B cell (primary cell): ENCODE measurements at regions of chr5 and their contacts with region 1.

Region 1: GRCh38 chr5:124649491-124650146 is 96.8 kb downstream of the ZNF608 start:
- DNase-seq: peak; percentile 96
- ATAC-seq: peak; percentile 74
- H3K4me3 ChIP-seq: peak overlapping the region; percentile 1 to 54 (median 25)
- H3K4me3 Mint-ChIP-seq: peak overlapping the region; percentile 38
- H3K27ac ChIP-seq: peak overlapping the region; percentile 76 to 84
- H3K27ac Mint-ChIP-seq: peak overlapping the region; percentile 88
- H3K4me1 ChIP-seq: peaks cover 70 to 88% of the 10 kb centered on the region in 2 donors
- H3K4me1 Mint-ChIP-seq: peaks cover 84% of the 10 kb centered on the region
- H3K27me3 ChIP-seq: peaks cover 0 to 24% (median 0%) of the 10 kb centered on the region in 4 experiments
- H3K27me3 Mint-ChIP-seq: no peaks in the 10 kb centered on the region
- CTCF ChIP-seq: no peak

Region 2: DNA sequence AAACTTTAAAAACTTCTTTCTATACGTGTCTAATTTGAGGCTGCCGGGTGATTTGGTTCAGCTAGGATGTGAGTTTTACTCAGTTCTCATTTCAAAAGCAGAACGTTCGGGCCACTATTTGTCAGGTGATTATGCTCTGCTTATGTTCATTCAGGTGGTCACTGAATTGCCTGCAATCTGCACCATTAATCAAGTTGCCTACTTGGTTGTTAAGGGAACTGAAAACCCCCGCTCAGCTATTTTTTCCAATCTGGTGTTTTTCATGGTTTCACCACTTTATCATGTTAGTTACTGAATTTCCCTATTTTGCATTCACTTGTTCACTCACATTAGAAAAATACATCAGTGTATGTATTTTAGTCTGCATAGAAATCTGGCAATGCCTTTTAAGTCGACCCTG is 614.7 kb before region 1 on chr5:
- CTCF ChIA-PET with region 1: no interaction called
- POLR2A ChIA-PET with region 1: no interaction called
- intact Hi-C with region 1: loop called (anchors 1 kb)
- DNase-seq: peak; percentile 90
- ATAC-seq: peak; percentile 94
- H3K4me3 ChIP-seq: peak overlapping the region in 1 of 5 experiments; percentile 31
- H3K4me3 Mint-ChIP-seq: peak overlapping the region; percentile 69
- H3K27ac ChIP-seq: peak overlapping the region; percentile 45 to 71
- H3K27ac Mint-ChIP-seq: peak overlapping the region; percentile 59
- H3K4me1 ChIP-seq: peaks cover 22 to 33% of the 10 kb centered on the region in 2 donors
- H3K4me1 Mint-ChIP-seq: peaks cover 35% of the 10 kb centered on the region
- H3K27me3 ChIP-seq: no peaks in the 10 kb centered on the region
- H3K27me3 Mint-ChIP-seq: no peaks in the 10 kb centered on the region
- CTCF ChIP-seq: no peak

Region 3: GRCh38 chr5:124410539-124411488 is 238.8 kb before region 1 on chr5:
- CTCF ChIA-PET with region 1: no interaction called
- POLR2A ChIA-PET with region 1: interaction called, 3 read pairs
- intact Hi-C with region 1: loop called (anchors 5 kb)
- DNase-seq: peak; percentile 72
- ATAC-seq: peak; percentile 96
- H3K4me3 ChIP-seq: peak overlapping the region in 2 of 5 experiments; percentile 14 to 24
- H3K4me3 Mint-ChIP-seq: peak overlapping the region; percentile 60
- H3K27ac ChIP-seq: no peak overlapping the region
- H3K27ac Mint-ChIP-seq: no peak overlapping the region
- H3K4me1 ChIP-seq: peaks cover 22 to 24% of the 10 kb centered on the region in 2 donors
- H3K4me1 Mint-ChIP-seq: peaks cover 21% of the 10 kb centered on the region
- H3K27me3 ChIP-seq: no peaks in the 10 kb centered on the region
- H3K27me3 Mint-ChIP-seq: no peaks in the 10 kb centered on the region
- CTCF ChIP-seq: no peak

Region 4: GRCh38 chr5:124524552-124525232 is 124.9 kb before region 1 on chr5:
- CTCF ChIA-PET with region 1: interaction called, 6 read pairs
- POLR2A ChIA-PET with region 1: no interaction called
- intact Hi-C with region 1: loop called (anchors 1 kb)
- DNase-seq: peak; percentile 83
- ATAC-seq: peak; percentile 95
- H3K4me3 ChIP-seq: no peak overlapping the region
- H3K4me3 Mint-ChIP-seq: no peak overlapping the region
- H3K27ac ChIP-seq: no peak overlapping the region
- H3K27ac Mint-ChIP-seq: no peak overlapping the region
- H3K4me1 ChIP-seq: peaks cover 14 to 15% of the 10 kb centered on the region in 2 donors
- H3K4me1 Mint-ChIP-seq: peaks cover 26% of the 10 kb centered on the region
- H3K27me3 ChIP-seq: no peaks in the 10 kb centered on the region
- H3K27me3 Mint-ChIP-seq: peaks cover 4% of the 10 kb centered on the region
- CTCF ChIP-seq: peak; percentile 74

Region 5: GRCh38 chr5:124599028-124599973 is 50.3 kb before region 1 on chr5:
- CTCF ChIA-PET with region 1: interaction called, 3 read pairs
- POLR2A ChIA-PET with region 1: no interaction called
- intact Hi-C with region 1: loop called (anchors 5 kb)
- DNase-seq: peak; percentile 74
- ATAC-seq: peak; percentile 86
- H3K4me3 ChIP-seq: no peak overlapping the region
- H3K4me3 Mint-ChIP-seq: peak overlapping the region; percentile 73
- H3K27ac ChIP-seq: no peak overlapping the region
- H3K27ac Mint-ChIP-seq: peak overlapping the region; percentile 42
- H3K4me1 ChIP-seq: peaks cover 28 to 32% of the 10 kb centered on the region in 2 donors
- H3K4me1 Mint-ChIP-seq: peaks cover 36% of the 10 kb centered on the region
- H3K27me3 ChIP-seq: peaks cover 0 to 5% (median 0%) of the 10 kb centered on the region in 4 experiments
- H3K27me3 Mint-ChIP-seq: no peaks in the 10 kb centered on the region
- CTCF ChIP-seq: no peak

Region 6: GRCh38 chr5:124634228-124634739 is 15.3 kb before region 1 on chr5:
- CTCF ChIA-PET with region 1: no interaction called
- POLR2A ChIA-PET with region 1: no interaction called
- intact Hi-C with region 1: no loop called
- DNase-seq: no peak
- ATAC-seq: no peak
- H3K4me3 ChIP-seq: no peak overlapping the region
- H3K4me3 Mint-ChIP-seq: no peak overlapping the region
- H3K27ac ChIP-seq: no peak overlapping the region
- H3K27ac Mint-ChIP-seq: no peak overlapping the region
- H3K4me1 ChIP-seq: peaks cover 0 to 7% of the 10 kb centered on the region in 2 donors
- H3K4me1 Mint-ChIP-seq: peaks cover 11% of the 10 kb centered on the region
- H3K27me3 ChIP-seq: peaks cover 0 to 2% (median 0%) of the 10 kb centered on the region in 4 experiments
- H3K27me3 Mint-ChIP-seq: no peaks in the 10 kb centered on the region
- CTCF ChIP-seq: no peak

Region 7: GRCh38 chr5:124902097-124902821 is 252.6 kb after region 1 on chr5:
- CTCF ChIA-PET with region 1: interaction called, 3 read pairs
- POLR2A ChIA-PET with region 1: no interaction called
- intact Hi-C with region 1: loop called (anchors 1 kb)
- DNase-seq: peak; percentile 81
- ATAC-seq: peak; percentile 98
- H3K4me3 ChIP-seq: peak overlapping the region in 2 of 5 experiments; percentile 0 to 13
- H3K4me3 Mint-ChIP-seq: peak overlapping the region; percentile 66
- H3K27ac ChIP-seq: peak overlapping the region; percentile 58 to 70
- H3K27ac Mint-ChIP-seq: peak overlapping the region; percentile 82
- H3K4me1 ChIP-seq: peaks cover 22 to 27% of the 10 kb centered on the region in 2 donors
- H3K4me1 Mint-ChIP-seq: peaks cover 39% of the 10 kb centered on the region
- H3K27me3 ChIP-seq: no peaks in the 10 kb centered on the region
- H3K27me3 Mint-ChIP-seq: no peaks in the 10 kb centered on the region
- CTCF ChIP-seq: no peak